ENCODE measurements at regions of chr12 and their contacts with region 1.

Region 1: GRCh38 chr12:69070319-69071090 is 137.5 kb upstream of the CPM start:
- DNase-seq: peak; percentile 56
- H3K4me3 ChIP-seq: no peak overlapping the region; a peak in 1 of 4 replicates
- H3K27ac ChIP-seq: no peak overlapping the region
- H3K4me1 ChIP-seq: no peaks in the 10 kb centered on the region; a peak in 1 of 4 replicates
- H3K27me3 ChIP-seq: no peaks in the 10 kb centered on the region
- CTCF ChIP-seq: peak; percentile 92
- EP300 ChIP-seq: no peak
- RAD21 ChIP-seq: peak; percentile 82

Region 2: GRCh38 chr12:68889647-68890121 is 180.8 kb before region 1 on chr12:
- CTCF ChIA-PET with region 1: no interaction called
- POLR2A ChIA-PET with region 1: no interaction called
- DNase-seq: no peak
- H3K4me3 ChIP-seq: no peak overlapping the region
- H3K27ac ChIP-seq: no peak overlapping the region
- H3K4me1 ChIP-seq: 0 out of 4 replicates have a peak, but pooled peaks cover 0 to 6% of the 10 kb centered on the region in 2 experiments
- H3K27me3 ChIP-seq: no peaks in the 10 kb centered on the region
- CTCF ChIP-seq: no peak
- EP300 ChIP-seq: no peak
- RAD21 ChIP-seq: no peak

Region 3: GRCh38 chr12:68977909-68978610 is 92.4 kb before region 1 on chr12:
- CTCF ChIA-PET with region 1: no interaction called
- POLR2A ChIA-PET with region 1: no interaction called
- DNase-seq: no peak
- H3K4me3 ChIP-seq: no peak overlapping the region
- H3K27ac ChIP-seq: no peak overlapping the region
- H3K4me1 ChIP-seq: no peaks in the 10 kb centered on the region; a peak in 1 of 4 replicates
- H3K27me3 ChIP-seq: no peaks in the 10 kb centered on the region
- CTCF ChIP-seq: no peak
- EP300 ChIP-seq: no peak
- RAD21 ChIP-seq: no peak

Region 4: GRCh38 chr12:69059483-69060457 is 10.7 kb before region 1 on chr12:
- CTCF ChIA-PET with region 1: interaction called, 12 read pairs
- POLR2A ChIA-PET with region 1: no interaction called
- DNase-seq: no peak
- H3K4me3 ChIP-seq: no peak overlapping the region
- H3K27ac ChIP-seq: peak overlapping the region in 1 of 2 experiments; percentile 42; a peak in 2 of 4 replicates
- H3K4me1 ChIP-seq: peaks cover 0 to 6% of the 10 kb centered on the region in 2 experiments; a peak in 2 of 4 replicates
- H3K27me3 ChIP-seq: no peaks in the 10 kb centered on the region
- CTCF ChIP-seq: no peak
- EP300 ChIP-seq: peak in 1 of 2 experiments; percentile 89; a peak in 2 of 4 replicates
- RAD21 ChIP-seq: no peak

Region 5: DNA sequence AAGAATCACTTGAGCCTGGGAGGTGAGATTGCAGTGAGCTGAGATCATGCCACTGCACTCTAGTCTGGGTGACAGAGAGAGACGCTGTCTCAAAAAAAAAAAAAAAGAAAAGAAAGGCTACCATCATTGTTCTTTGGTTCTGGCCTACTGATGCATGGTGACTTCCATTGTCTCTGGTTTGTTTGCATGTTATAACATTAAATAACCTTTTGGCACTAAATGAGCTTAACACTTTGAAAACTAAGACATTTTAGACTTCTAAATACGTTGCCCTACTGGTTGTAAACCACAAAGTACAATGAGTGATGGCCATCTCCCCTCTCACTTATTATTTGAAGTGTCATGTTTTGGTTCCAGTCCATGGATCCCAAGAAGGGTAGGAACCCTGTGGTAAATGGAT is 15.3 kb after region 1 on chr12:
- CTCF ChIA-PET with region 1: interaction called, 10 read pairs
- POLR2A ChIA-PET with region 1: no interaction called
- DNase-seq: no peak
- H3K4me3 ChIP-seq: no peak overlapping the region
- H3K27ac ChIP-seq: no peak overlapping the region
- H3K4me1 ChIP-seq: no peaks in the 10 kb centered on the region
- H3K27me3 ChIP-seq: no peaks in the 10 kb centered on the region
- CTCF ChIP-seq: no peak
- EP300 ChIP-seq: no peak
- RAD21 ChIP-seq: no peak